ENCODE measurements at regions of chr1 and their contacts with region 1.

Region 1: GRCh38 chr1:34188418-34188817 is 11.7 kb downstream of the C1orf94 start:
- DNase-seq: peak in 1 of 2 experiments; percentile 61
- H3K4me3 ChIP-seq: peak overlapping the region in 1 of 4 experiments; percentile 27; a peak in 1 of 8 replicates
- H3K27ac ChIP-seq: no peak overlapping the region
- H3K4me1 ChIP-seq: peaks cover 11 to 21% (median 18%) of the 10 kb centered on the region in 4 experiments
- H3K27me3 ChIP-seq: peaks cover 0 to 4% (median 2%) of the 10 kb centered on the region in 4 experiments; a peak in 3 of 7 replicates
- CTCF ChIP-seq: no peak
- EP300 ChIP-seq: 0 out of 3 replicates have a peak, but pooled peaks of 1 of the 2 experiments have one; percentile 76
- POLR2A ChIP-seq: no peak
- RAD21 ChIP-seq: peak in 1 of 2 experiments; percentile 25; a peak in 1 of 4 replicates

Region 2: GRCh38 chr1:34176830-34177603 is 11.4 kb before region 1 on chr1 and contains the start of gene C1orf94:
- CTCF ChIA-PET with region 1: interaction called, 14 read pairs
- POLR2A ChIA-PET with region 1: interaction called, 15 read pairs
- DNase-seq: peak in 1 of 2 experiments; percentile 68
- H3K4me3 ChIP-seq: peak within 1 kb of the TSS; percentile 29 to 58 (median 42)
- H3K27ac ChIP-seq: no peak within 1 kb of the TSS
- H3K4me1 ChIP-seq: peaks cover 9 to 27% (median 12%) of the 10 kb centered on the region in 4 experiments
- H3K27me3 ChIP-seq: peaks cover 0 to 16% (median 7%) of the 10 kb centered on the region in 4 experiments; a peak in 4 of 7 replicates
- CTCF ChIP-seq: peak in 2 of 3 experiments; percentile 48 to 49; a peak in 3 of 4 replicates
- EP300 ChIP-seq: no peak
- POLR2A ChIP-seq: no peak
- RAD21 ChIP-seq: peak; percentile 23 to 30; a peak in 2 of 4 replicates
- total RNA-seq, gene C1orf94: 4.8 and 5.8 TPM in 2 replicates

Measured in H1 (cell line).